ENCODE measurements at regions of chr4 and their contacts with region 1.

Region 1: DNA sequence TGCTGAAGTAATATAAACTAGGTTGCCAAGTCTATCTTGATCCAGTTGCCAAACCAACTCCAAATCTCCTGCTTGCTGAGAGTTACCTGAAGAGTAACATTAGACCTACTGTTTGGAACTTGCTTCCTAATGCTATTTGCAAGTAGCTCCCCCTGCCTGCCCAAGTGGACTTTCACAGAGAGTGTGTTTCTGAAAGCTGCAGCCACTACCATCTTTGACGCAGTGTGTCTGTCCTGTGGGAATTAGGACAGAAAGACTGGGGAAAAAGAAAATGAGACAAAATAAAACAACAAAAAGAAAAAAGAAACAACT is 195.0 kb upstream of the HS3ST1 start:
- DNase-seq: peak; percentile 75
- H3K4me3 ChIP-seq: no peak overlapping the region
- H3K27ac ChIP-seq: no peak overlapping the region
- H3K4me1 ChIP-seq: no peaks in the 10 kb centered on the region
- H3K27me3 ChIP-seq: no peaks in the 10 kb centered on the region
- CTCF ChIP-seq: peak; percentile 52

Region 2: GRCh38 chr4:11428899-11429698 is 194.6 kb before region 1 on chr4:
- intact Hi-C with region 1: loop called (anchors 10 kb)
- DNase-seq: peak; percentile 91
- H3K4me3 ChIP-seq: peak overlapping the region; percentile 62
- H3K27ac ChIP-seq: peak overlapping the region; percentile 88
- H3K4me1 ChIP-seq: peaks cover 4% of the 10 kb centered on the region
- H3K27me3 ChIP-seq: no peaks in the 10 kb centered on the region
- CTCF ChIP-seq: peak; percentile 61

Region 3: DNA sequence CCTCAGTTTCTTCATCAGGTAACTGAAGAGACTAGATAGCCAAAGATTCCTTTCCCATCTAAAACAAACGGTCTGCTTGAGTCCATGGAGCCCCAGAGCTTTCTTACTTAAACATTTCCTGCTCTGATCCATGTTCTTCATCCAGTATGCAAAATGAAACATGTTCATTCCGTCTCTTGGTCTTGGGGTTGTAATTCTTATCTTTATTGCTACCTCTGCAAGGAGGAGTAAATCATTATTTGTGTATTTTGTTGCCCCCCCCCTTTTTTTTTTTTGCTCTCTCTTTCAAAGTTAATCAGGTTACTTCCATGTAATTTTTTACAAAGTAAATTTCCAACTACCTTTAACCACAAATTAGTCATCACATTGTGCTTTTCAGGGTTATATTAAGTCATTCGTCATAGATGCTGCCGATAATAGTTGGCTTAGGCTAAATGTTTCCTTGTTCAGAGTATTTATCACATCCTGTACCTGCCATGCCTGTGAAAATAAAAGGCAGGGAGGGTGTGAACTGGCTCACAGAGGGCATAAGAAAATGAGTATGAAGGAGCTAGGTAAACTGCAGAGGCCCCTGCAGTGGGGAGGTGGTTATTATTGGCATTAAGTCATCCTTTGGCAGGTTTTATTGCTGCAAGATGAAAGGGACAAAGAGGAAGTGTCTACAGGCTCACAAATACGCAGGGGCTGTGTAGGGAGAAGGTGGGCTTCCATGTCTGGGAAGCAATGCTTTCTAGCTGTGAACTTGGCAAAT is 118.3 kb before region 1 on chr4:
- intact Hi-C with region 1: loop called (anchors 10 kb)
- DNase-seq: peak; percentile 60
- H3K4me3 ChIP-seq: no peak overlapping the region
- H3K27ac ChIP-seq: peak overlapping the region; percentile 65
- H3K4me1 ChIP-seq: no peaks in the 10 kb centered on the region
- H3K27me3 ChIP-seq: no peaks in the 10 kb centered on the region
- CTCF ChIP-seq: no peak

Measured in colonic mucosa (tissue), 4 donors.